ENCODE measurements at regions of chr5 and their contacts with region 1.

Region 1: DNA sequence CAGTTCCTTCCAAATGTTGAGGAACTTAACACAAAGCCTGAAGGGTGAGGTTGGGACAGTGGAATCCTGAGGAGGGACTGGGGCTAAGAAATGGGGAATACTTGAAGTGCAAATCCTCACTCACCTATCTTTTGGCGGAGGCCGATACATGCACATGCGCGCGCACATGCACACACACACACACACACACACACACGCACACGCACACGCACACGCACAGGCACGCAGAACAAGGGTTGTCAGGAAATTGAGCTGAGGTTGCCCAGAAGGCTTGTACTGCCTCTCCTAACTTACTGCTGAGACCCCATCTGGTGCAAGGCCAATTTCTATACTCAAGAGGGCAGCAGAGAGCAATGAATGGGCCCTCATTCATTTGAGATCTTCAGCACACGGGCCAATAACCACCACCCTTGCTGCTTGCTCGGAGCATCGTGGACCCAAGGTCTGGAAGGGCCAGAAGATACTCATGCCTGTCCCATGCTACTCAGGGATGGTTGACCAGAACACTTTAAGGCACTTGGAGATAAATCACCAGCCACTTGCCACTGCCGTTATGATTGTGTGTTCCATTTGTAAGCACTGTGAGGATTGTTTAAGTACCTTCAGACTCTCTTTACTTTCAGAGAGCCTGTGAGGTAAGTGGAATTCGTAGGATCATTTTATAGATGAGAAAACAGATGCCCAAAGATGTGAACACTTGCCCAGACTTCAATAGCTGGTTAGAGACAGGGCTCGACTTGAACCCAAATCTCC is 21.5 kb downstream of the BTF3 start:
- DNase-seq: peak; percentile 78 to 82
- H3K4me3 ChIP-seq: no peak overlapping the region
- H3K4me3 Mint-ChIP-seq: peak overlapping the region; percentile 48
- H3K27ac Mint-ChIP-seq: no peak overlapping the region
- H3K4me1 ChIP-seq: no peaks in the 10 kb centered on the region
- H3K4me1 Mint-ChIP-seq: no peaks in the 10 kb centered on the region
- H3K27me3 ChIP-seq: no peaks in the 10 kb centered on the region
- H3K27me3 Mint-ChIP-seq: no peaks in the 10 kb centered on the region
- CTCF ChIP-seq: peak; percentile 75 to 87

Region 2: GRCh38 chr5:73066466-73066865 is 453.2 kb before region 1 on chr5:
- CTCF ChIA-PET with region 1: no interaction called
- POLR2A ChIA-PET with region 1: no interaction called
- intact Hi-C with region 1: no loop called
- DNase-seq: no peak
- H3K4me3 ChIP-seq: no peak overlapping the region
- H3K4me3 Mint-ChIP-seq: no peak overlapping the region
- H3K27ac Mint-ChIP-seq: no peak overlapping the region
- H3K4me1 ChIP-seq: peaks cover 15% of the 10 kb centered on the region
- H3K4me1 Mint-ChIP-seq: peaks cover 13% of the 10 kb centered on the region
- H3K27me3 ChIP-seq: no peaks in the 10 kb centered on the region
- H3K27me3 Mint-ChIP-seq: no peaks in the 10 kb centered on the region
- CTCF ChIP-seq: no peak

Region 3: GRCh38 chr5:73540192-73540591 is 20.5 kb after region 1 on chr5:
- CTCF ChIA-PET with region 1: interaction called, 6 read pairs
- POLR2A ChIA-PET with region 1: interaction called, 6 read pairs
- intact Hi-C with region 1: loop called (anchors 1 kb)
- DNase-seq: no peak
- H3K4me3 ChIP-seq: no peak overlapping the region
- H3K4me3 Mint-ChIP-seq: no peak overlapping the region
- H3K27ac Mint-ChIP-seq: peak overlapping the region; percentile 56
- H3K4me1 ChIP-seq: peaks cover 26% of the 10 kb centered on the region
- H3K4me1 Mint-ChIP-seq: peaks cover 24% of the 10 kb centered on the region
- H3K27me3 ChIP-seq: no peaks in the 10 kb centered on the region
- H3K27me3 Mint-ChIP-seq: no peaks in the 10 kb centered on the region
- CTCF ChIP-seq: no peak

Region 4: GRCh38 chr5:73552642-73553041 is 32.9 kb after region 1 on chr5:
- CTCF ChIA-PET with region 1: no interaction called
- POLR2A ChIA-PET with region 1: no interaction called
- intact Hi-C with region 1: no loop called
- DNase-seq: no peak
- H3K4me3 ChIP-seq: no peak overlapping the region
- H3K4me3 Mint-ChIP-seq: no peak overlapping the region
- H3K27ac Mint-ChIP-seq: no peak overlapping the region
- H3K4me1 ChIP-seq: no peaks in the 10 kb centered on the region
- H3K4me1 Mint-ChIP-seq: no peaks in the 10 kb centered on the region
- H3K27me3 ChIP-seq: no peaks in the 10 kb centered on the region
- H3K27me3 Mint-ChIP-seq: no peaks in the 10 kb centered on the region
- CTCF ChIP-seq: no peak

Region 5: GRCh38 chr5:73565139-73565968 is 45.6 kb after region 1 on chr5 and contains the starts of genes ANKRA2 and UTP15:
- CTCF ChIA-PET with region 1: no interaction called
- POLR2A ChIA-PET with region 1: no interaction called
- intact Hi-C with region 1: loop called (anchors 1 kb)
- DNase-seq: peak; percentile 98 to 99
- H3K4me3 ChIP-seq: peak within 1 kb of the TSS; percentile 61
- H3K4me3 Mint-ChIP-seq: peak within 1 kb of the TSS; percentile 84
- H3K27ac Mint-ChIP-seq: peak within 1 kb of the TSS; percentile 90
- H3K4me1 ChIP-seq: peaks cover 9% of the 10 kb centered on the region; the same call in 1 of the 2 replicates
- H3K4me1 Mint-ChIP-seq: peaks cover 12% of the 10 kb centered on the region
- H3K27me3 ChIP-seq: no peaks in the 10 kb centered on the region
- H3K27me3 Mint-ChIP-seq: no peaks in the 10 kb centered on the region
- CTCF ChIP-seq: no peak
- total RNA-seq, gene ANKRA2: 9.2 and 10.2 TPM in 2 replicates
- total RNA-seq, gene UTP15: 29.1 and 33.0 TPM in 2 replicates

Region 6: GRCh38 chr5:73596705-73597328 is 77.1 kb after region 1 on chr5:
- CTCF ChIA-PET with region 1: no interaction called
- POLR2A ChIA-PET with region 1: no interaction called
- intact Hi-C with region 1: loop called (anchors 2 kb)
- DNase-seq: peak in 1 of 2 experiments; percentile 56
- H3K4me3 ChIP-seq: no peak overlapping the region
- H3K4me3 Mint-ChIP-seq: no peak overlapping the region
- H3K27ac Mint-ChIP-seq: no peak overlapping the region
- H3K4me1 ChIP-seq: no peaks in the 10 kb centered on the region
- H3K4me1 Mint-ChIP-seq: no peaks in the 10 kb centered on the region
- H3K27me3 ChIP-seq: no peaks in the 10 kb centered on the region
- H3K27me3 Mint-ChIP-seq: peaks cover 2% of the 10 kb centered on the region
- CTCF ChIP-seq: peak; percentile 69 to 79

Region 7: GRCh38 chr5:73722231-73722630 is 202.5 kb after region 1 on chr5:
- CTCF ChIA-PET with region 1: no interaction called
- POLR2A ChIA-PET with region 1: no interaction called
- intact Hi-C with region 1: no loop called
- DNase-seq: no peak
- H3K4me3 ChIP-seq: no peak overlapping the region
- H3K4me3 Mint-ChIP-seq: no peak overlapping the region
- H3K27ac Mint-ChIP-seq: no peak overlapping the region
- H3K4me1 ChIP-seq: no peaks in the 10 kb centered on the region
- H3K4me1 Mint-ChIP-seq: no peaks in the 10 kb centered on the region
- H3K27me3 ChIP-seq: no peaks in the 10 kb centered on the region
- H3K27me3 Mint-ChIP-seq: peaks cover 4% of the 10 kb centered on the region
- CTCF ChIP-seq: no peak

Region 8: DNA sequence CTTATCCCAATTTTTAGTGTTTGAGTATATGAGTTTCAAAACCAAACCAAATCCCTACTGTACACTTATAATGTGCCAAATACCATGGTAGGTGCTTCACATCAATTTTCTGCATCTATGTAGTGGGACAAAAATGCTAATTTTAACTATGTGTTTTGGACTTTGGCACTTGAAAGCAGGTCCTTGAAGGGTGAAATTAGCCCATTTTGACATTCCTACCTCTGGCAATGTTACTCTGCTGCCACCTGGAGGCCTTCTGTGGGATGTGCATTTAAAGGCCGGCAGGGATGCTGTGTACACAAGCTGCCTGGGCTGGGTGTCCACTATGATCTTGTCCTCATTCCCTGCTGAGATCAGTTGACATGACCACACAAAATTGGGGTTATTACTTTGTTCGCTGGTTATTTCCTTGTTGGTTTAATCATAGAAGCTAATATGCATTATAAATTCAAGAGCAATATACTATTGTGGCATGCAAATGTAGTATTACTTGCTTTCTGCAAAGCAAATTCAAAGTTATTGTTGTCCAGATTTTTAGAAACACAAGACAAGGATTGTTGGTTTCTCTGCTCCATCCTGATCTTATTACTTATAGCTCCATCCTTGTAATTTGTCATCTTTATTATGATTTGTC is 273.1 kb after region 1 on chr5:
- CTCF ChIA-PET with region 1: no interaction called
- POLR2A ChIA-PET with region 1: no interaction called
- intact Hi-C with region 1: loop called (anchors 1 kb)
- DNase-seq: peak; percentile 76 to 81
- H3K4me3 ChIP-seq: no peak overlapping the region
- H3K4me3 Mint-ChIP-seq: no peak overlapping the region
- H3K27ac Mint-ChIP-seq: no peak overlapping the region
- H3K4me1 ChIP-seq: peaks cover 9% of the 10 kb centered on the region
- H3K4me1 Mint-ChIP-seq: peaks cover 13% of the 10 kb centered on the region
- H3K27me3 ChIP-seq: no peaks in the 10 kb centered on the region
- H3K27me3 Mint-ChIP-seq: no peaks in the 10 kb centered on the region
- CTCF ChIP-seq: peak; percentile 93 to 96